Left cardiac atrium (tissue), 4 donors: ENCODE measurements at regions of chr2 and their contacts with region 1.

Region 1: GRCh38 chr2:113203901-113204519 is 30.2 kb downstream of the PSD4 start:
- DNase-seq: peak; percentile 69
- ATAC-seq: peak; percentile 68 to 75

Region 2: GRCh38 chr2:113080134-113080533 is 123.9 kb before region 1 on chr2:
- intact Hi-C with region 1: loop called in 1 of 2 experiments (anchors 5 kb)
- DNase-seq: no peak
- ATAC-seq: peak; percentile 41 to 42

Region 3: GRCh38 chr2:113370478-113371091 is 166.6 kb after region 1 on chr2:
- intact Hi-C with region 1: loop called (anchors 5 to 10 kb)
- DNase-seq: peak; percentile 61
- ATAC-seq: peak; percentile 92 to 94